ENCODE measurements at regions of chr11 and their contacts with region 1.

Region 1: GRCh38 chr11:19071255-19071654 is 10.7 kb upstream of the MRGPRX2 start:
- DNase-seq: peak; percentile 84
- H3K4me3 ChIP-seq: no peak overlapping the region
- H3K27ac ChIP-seq: no peak overlapping the region
- H3K4me1 ChIP-seq: no peaks in the 10 kb centered on the region
- H3K27me3 ChIP-seq: peaks cover 13 to 23% of the 10 kb centered on the region in 2 experiments
- CTCF ChIP-seq: peak; percentile 89 to 98
- POLR2A ChIP-seq: no peak

Region 2: GRCh38 chr11:19160847-19161246 is 89.6 kb after region 1 on chr11:
- CTCF ChIA-PET with region 1: interaction called, 105 read pairs
- POLR2A ChIA-PET with region 1: no interaction called
- dilution Hi-C with region 1: no loop called
- intact Hi-C with region 1: no loop called
- DNase-seq: peak; percentile 16
- H3K4me3 ChIP-seq: no peak overlapping the region
- H3K27ac ChIP-seq: no peak overlapping the region
- H3K4me1 ChIP-seq: no peaks in the 10 kb centered on the region
- H3K27me3 ChIP-seq: no peaks in the 10 kb centered on the region
- CTCF ChIP-seq: no peak
- POLR2A ChIP-seq: no peak

Region 3: DNA sequence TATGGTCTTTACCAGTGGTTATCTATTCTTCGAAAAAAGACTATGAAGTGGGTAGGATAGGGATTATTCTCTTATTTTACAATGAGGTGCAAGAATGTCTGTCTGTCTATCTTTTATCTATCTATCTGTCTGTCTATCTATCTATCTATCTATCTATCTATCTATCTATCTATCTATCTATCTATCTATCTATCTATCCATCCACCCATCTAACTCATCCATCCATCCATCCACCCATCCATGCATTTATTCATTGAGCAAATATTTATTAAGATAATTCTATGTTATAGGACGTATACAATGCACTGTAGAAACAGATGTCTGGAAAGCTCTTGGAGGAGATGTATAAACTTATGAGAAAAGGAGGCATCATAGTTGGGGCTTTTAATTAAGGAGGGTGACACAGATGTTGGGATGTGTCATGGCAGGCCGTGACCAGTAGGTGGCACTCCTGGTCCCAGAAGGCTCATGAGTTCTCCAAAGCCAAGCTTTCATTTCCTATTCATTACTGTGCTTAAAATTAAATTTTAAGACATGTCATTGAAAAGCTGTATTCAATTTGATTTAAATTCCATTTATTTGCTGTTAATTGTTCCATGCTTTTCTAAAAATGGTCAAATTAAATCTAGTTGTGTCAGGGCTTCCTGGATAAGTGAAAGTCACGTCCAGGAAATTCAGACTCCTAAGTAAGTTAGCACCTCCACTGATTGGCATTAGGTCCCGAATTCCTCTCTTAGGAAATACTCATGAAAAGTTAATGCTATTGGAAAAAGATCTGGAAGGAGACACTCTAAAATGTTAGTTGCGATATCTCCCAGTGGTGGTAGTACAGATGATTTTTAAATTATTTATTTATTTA is 188.5 kb after region 1 on chr11:
- CTCF ChIA-PET with region 1: interaction called, 22 read pairs
- POLR2A ChIA-PET with region 1: no interaction called
- dilution Hi-C with region 1: no loop called
- intact Hi-C with region 1: loop called (anchors 1 kb)
- DNase-seq: peak; percentile 73
- H3K4me3 ChIP-seq: peak overlapping the region in 1 of 3 experiments; percentile 30
- H3K27ac ChIP-seq: no peak overlapping the region
- H3K4me1 ChIP-seq: no peaks in the 10 kb centered on the region
- H3K27me3 ChIP-seq: peaks cover 9 to 11% of the 10 kb centered on the region in 2 experiments
- CTCF ChIP-seq: peak; percentile 87 to 95
- POLR2A ChIP-seq: no peak

Region 4: DNA sequence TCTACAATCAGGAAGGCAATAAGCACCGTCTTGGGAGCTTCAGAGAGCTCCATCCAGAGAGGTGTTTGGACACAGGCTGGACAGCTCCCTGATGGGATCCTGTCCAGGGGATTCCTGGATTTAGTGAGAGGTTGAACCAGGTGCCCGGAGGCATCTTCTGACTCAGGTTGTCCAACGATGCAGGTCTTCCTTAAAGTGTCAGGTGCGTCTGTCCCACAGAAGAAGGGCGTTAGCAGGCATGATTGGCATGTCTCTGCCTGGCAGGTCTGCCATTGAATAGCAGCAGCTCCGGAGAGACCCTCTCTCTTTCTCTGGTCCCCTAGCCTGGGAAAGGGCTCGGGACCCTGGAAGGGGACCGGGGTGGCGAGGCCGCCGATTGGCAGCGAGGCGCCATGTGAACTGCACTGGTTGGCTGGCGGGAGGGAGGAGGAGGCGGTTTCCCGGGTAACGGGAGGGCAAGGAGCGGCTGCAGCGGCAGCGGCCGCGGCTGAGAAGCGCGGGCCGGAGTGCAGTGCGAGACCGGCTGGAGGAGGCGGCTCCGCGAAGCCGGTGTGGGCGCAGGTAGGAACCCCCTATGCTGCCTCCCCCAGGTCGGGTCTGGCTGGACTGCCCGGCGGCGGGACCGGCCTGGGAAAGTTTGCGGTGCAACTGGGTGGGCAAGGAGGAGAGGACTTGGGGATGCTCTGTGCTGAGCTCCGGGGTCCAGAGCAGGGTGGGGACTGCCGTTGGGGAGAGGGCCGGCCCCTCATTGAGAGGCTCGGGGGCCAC is 273.7 kb after region 1 on chr11:
- CTCF ChIA-PET with region 1: interaction called, 16 read pairs
- POLR2A ChIA-PET with region 1: no interaction called
- dilution Hi-C with region 1: no loop called
- intact Hi-C with region 1: no loop called
- DNase-seq: peak; percentile 43
- H3K4me3 ChIP-seq: peak overlapping the region in 2 of 3 experiments; percentile 32 to 58
- H3K27ac ChIP-seq: no peak overlapping the region
- H3K4me1 ChIP-seq: peaks cover 12% of the 10 kb centered on the region
- H3K27me3 ChIP-seq: peaks cover 23 to 36% of the 10 kb centered on the region in 2 experiments
- CTCF ChIP-seq: no peak
- POLR2A ChIP-seq: no peak

Region 5: DNA sequence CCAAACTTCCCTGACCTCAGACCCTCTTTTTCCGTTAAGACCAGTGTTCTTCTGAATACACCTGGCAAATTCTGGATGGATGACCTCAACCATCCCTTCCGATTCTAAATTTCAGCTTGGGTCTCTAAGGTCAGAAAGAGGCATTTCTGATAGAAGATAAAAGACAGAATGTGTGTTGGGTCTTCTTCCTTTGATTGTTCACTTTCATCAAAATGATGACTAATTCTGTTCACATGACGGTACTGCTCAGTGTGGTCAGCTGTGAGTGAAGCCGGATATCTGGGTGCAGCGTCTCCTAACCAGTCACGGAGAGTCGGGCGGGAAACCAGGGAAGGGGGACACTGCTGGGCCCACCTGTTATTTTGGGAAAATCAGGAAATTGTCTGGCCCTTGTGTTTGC is 489.8 kb after region 1 on chr11:
- CTCF ChIA-PET with region 1: interaction called, 72 read pairs
- POLR2A ChIA-PET with region 1: no interaction called
- dilution Hi-C with region 1: no loop called
- intact Hi-C with region 1: no loop called
- DNase-seq: peak; percentile 81
- H3K4me3 ChIP-seq: no peak overlapping the region
- H3K27ac ChIP-seq: peak overlapping the region; percentile 61
- H3K4me1 ChIP-seq: peaks cover 23% of the 10 kb centered on the region
- H3K27me3 ChIP-seq: no peaks in the 10 kb centered on the region
- CTCF ChIP-seq: no peak
- POLR2A ChIP-seq: no peak

Measured in endothelial cell of umbilical vein (primary cell).